ENCODE measurements at regions of chr3 and their contacts with region 1.

Region 1: DNA sequence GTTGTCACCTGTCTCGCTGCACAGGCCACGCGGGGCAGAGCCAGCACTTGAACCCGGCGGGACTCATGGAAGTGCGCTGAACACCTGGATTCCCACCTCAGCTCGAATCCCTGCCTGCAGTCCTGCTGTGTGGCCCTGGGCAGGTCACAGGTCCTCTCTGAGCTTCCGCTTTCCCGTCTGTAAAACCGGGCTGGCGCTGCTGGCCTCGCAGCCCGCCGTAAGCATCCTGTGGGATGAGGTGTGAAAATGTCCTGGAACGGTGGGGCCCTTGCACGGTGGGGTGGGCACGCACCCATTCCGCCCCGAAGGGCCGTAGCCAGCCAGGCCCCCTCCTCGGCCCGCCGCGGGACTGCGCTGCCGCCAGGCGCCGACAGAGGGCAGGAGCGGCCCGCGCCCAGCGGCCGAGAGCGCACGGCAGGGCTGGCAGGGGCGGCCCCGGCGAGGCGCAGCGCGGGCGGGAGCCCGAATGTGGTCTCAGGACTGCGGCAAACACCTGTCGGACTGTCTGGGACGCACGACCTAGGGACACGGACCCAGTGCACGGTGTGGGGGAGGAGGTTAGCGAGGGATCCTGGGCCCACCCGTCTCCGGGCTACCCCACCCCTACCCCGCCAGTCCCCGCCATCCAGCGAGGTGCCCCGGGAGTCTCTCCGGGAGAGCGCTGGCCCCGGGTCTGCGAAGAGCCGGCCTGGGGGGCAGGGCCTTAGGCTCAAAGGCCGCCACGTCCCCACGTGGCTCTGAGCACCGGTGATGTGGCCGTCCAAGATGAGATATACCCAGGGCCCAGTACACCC is 40.4 kb downstream of the DNAJB8 start:
- DNase-seq: peak in 34 of 42 donors; percentile 9 to 75 (median 45)

Region 2: DNA sequence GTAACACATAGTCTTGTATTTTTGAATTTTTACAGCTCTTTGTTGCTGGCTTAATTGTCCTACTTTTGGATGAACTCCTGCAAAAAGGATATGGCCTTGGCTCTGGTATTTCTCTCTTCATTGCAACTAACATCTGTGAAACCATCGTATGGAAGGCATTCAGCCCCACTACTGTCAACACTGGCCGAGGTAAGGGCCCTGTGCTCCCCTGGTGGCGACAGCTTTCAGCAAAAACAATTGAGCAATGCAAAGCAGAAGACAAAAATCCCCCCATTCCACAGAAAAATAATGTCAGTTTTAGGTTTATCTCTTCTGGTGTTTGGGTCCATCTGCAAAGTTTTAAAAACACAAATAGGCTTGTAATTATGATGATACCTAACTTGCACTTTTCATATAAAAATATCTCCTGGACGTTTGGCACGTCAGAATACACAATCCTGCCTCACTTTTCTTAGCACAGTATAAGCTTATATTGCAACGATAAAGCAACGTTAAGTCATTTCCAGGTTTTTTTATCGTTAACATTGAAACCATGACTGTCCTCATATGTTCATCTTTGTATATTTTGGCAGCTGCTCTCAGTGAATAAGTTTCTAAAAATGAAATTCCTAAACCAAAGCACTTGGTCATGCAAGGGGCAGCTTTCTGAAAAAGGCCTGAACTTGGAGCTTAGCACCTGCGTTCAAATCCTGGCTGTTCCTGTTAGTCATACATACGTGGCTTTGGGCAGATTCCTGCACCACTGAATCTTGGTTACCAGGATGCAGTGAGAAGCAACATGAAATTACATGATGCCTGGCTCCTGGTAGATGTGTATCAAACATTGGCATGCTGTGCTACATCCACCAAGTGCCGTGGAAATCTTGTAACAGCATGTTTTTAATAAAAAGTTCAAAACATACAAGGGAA is 365.6 kb before region 1 on chr3:
- intact Hi-C with region 1: no loop called
- DNase-seq: no peak

Region 3: GRCh38 chr3:128274771-128275211 is 151.5 kb before region 1 on chr3:
- intact Hi-C with region 1: no loop called
- DNase-seq: peak in 1 of 42 donors; percentile 22

Region 4: GRCh38 chr3:128497387-128498126 is 71.2 kb after region 1 on chr3:
- intact Hi-C with region 1: loop called (anchors 5 kb)
- DNase-seq: peak; percentile 59 to 92 (median 82)

Region 5: GRCh38 chr3:128607710-128608048 is 181.4 kb after region 1 on chr3:
- intact Hi-C with region 1: loop called (anchors 5 kb)
- DNase-seq: peak in 5 of 42 donors; percentile 5 to 35 (median 17)